ENCODE measurements at regions of chr12 and their contacts with region 1.

Region 1: DNA sequence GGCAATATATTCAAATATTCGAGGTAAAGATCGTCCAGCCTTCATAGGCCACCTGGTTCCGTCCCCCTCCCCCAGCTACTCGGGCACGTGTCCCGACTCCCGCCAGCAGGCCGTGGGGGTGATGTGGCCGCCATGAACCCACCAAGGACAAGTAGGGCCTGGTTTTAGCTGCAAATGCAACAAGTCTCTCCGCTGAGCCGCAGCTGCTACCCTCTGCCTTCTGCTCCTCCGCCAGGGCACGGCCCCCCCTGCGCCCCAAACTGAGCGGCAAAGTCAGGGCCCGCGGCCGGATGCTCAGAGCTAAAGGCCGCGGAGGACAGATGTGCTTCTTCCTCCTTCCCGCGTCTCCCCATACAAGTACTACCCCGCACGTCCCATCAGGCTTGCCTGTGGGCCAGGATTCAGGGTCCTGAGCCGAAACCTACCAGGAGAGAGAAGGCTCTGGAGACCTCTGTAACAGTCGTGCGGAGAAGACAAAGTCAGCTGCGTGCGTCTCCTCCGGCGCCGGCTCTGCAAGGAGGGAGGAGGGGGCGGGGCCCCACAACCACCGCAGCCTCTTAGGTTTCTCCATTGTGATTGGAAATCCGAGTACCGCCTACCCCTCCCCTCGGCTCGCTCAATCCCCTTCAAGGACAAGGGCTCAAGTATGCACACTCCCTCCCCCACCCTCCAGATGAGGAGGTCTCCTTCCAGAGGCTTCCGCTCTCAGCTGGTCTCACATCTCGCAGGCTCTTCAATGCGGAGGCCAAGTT is at the start of gene LDHB:
- DNase-seq: peak; percentile 89

Region 2: DNA sequence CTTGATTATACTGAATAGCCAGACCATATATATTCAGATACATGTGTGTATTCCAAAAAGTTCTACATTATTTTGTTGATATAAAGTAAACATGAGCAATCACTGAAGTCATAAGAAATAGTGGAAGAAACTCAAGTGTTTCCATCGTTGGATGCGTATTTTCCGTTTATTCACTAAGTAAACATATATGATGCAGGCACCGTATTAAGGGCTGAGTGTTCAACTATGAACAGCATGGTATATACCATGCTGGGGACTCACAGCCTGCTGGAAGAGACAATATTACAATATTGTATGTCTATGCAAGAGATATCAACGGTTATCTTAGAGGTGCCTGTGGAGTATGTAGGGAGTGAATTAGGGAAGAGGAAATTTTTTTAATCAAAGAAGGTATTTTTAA is 218.9 kb before region 1 on chr12:
- CTCF ChIA-PET with region 1: no interaction called
- POLR2A ChIA-PET with region 1: interaction called, 12 read pairs
- DNase-seq: no peak

Region 3: GRCh38 chr12:21527451-21528180 is 129.9 kb before region 1 on chr12:
- CTCF ChIA-PET with region 1: no interaction called
- POLR2A ChIA-PET with region 1: interaction called, 11 read pairs
- DNase-seq: peak; percentile 60

Region 4: DNA sequence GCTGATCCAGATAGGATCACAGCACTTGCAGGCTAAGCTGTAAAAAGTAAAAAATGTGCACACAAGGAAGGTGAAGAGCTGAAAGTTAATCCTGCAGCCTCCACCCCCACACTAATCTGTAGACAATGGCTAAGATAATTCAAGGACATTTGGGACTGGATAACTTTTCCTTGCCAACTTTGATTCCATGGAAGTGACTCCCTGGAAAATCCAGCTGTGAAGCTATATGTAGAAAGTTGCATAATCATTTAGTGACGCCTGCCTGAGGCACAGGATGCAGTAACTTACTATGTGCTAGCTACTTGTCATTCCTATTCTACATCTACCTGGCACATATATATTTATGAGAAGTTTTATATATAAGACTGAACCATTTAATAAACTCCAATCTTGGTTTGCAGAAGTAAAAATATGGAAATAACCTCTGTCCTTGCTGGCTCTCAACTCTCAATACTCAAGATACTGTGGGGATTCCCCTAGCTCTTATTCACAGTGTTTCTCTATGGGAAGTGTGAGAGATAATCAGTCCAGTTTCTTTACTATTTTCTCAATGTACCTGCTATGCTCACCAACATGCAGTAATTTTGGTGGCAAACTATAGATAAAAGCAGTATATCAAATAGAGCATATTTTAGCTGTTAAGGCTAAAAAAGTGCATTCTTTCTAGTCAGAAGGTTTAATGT is 14.7 kb before region 1 on chr12:
- CTCF ChIA-PET with region 1: no interaction called
- POLR2A ChIA-PET with region 1: interaction called, 17 read pairs
- DNase-seq: no peak

Region 5: GRCh38 chr12:21677622-21678277 is 20.2 kb after region 1 on chr12:
- CTCF ChIA-PET with region 1: interaction called, 3 read pairs
- POLR2A ChIA-PET with region 1: interaction called, 11 read pairs
- DNase-seq: no peak

Region 6: GRCh38 chr12:21800011-21800410 is 142.5 kb after region 1 on chr12:
- CTCF ChIA-PET with region 1: no interaction called
- POLR2A ChIA-PET with region 1: no interaction called
- DNase-seq: no peak

Measured in HEK293T (cell line).